OCI-LY7 (cell line): ENCODE measurements at regions of chr5 and their contacts with region 1.

Region 1: GRCh38 chr5:179974946-179975712 is 67.4 kb upstream of the TBC1D9B start:
- DNase-seq: peak; percentile 86
- H3K4me3 ChIP-seq: no peak overlapping the region
- H3K27ac ChIP-seq: no peak overlapping the region
- H3K4me1 ChIP-seq: peaks cover 25% of the 10 kb centered on the region
- CTCF ChIP-seq: peak; percentile 89

Region 2: DNA sequence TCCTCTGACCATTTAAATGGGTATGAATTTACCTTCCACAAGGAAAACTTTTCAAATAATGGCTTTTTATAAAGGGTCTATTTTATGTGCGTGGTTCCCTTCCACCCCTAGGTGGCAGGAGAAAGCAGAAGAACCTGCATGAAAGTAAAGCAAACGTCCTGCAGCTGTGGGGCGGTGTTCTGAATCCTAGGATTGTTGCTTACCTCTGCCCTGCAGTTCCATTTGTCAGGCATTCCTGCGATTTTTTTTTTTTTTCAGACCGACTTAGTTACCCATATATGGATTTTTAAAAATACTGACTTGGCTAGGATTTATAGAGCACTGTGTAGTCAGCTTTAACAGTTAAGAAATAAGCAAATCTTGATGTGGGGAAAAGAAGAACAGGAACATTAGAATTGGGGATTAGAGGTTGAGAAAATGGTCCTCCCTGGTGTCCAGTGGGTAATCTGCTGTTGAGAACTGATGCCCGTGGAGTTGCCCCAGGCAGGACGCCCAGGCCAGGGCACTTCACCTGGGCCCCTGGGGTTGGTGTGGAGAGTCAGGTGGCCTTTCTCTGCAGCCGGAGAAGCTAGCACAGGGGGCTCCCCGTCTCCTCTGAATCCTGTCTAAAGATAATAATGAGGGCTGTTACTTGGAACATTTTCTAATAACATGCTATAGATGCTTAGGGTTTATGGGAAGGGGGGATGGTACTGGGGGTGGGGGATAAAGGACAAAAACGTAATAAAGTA is 211.7 kb before region 1 on chr5:
- CTCF ChIA-PET with region 1: no interaction called
- POLR2A ChIA-PET with region 1: no interaction called
- intact Hi-C with region 1: loop called (anchors 10 kb)
- DNase-seq: peak; percentile 69
- H3K4me3 ChIP-seq: no peak overlapping the region
- H3K27ac ChIP-seq: no peak overlapping the region
- H3K4me1 ChIP-seq: peaks cover 17% of the 10 kb centered on the region
- CTCF ChIP-seq: peak; percentile 99

Region 3: DNA sequence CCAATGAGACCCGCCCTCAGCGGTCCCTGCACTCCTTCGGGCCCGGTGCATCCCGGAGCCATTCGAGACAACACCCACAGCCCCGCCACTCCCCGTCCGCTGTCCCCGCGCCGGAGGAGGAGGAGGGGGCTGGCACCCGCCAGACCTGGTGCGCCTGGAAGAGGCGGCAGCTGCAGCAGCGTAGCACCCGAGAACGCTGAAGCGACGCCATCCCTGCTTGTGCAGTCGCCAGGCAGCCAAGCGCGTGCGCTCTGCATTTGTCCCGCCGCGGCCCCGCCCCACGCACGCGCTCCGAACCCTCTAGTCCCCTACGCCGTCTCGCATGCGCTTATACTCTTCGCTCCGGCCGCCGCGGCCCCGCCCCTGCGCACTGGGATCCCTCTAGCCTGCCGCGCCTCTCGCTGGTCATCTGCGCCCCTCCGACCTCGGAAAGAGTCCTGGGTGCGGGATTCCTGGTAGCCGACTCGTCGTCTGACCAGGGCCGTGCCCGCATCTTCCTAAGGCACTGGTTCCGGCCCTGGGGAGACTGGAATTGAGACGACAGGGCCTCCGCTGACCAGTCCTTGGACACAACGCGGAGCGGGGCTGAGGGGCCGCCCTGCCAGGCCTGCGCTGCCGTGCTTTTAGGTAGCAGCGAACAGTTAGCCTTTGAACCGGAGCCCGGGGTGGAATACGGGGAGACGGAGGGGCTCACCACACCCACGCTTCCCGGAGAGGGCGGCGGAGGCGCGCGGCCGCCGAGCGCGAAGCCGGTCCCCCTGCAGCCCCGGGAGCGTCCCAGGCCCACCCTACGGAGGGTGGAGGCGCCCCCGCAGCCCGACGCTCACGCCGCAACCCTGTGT is 116.3 kb before region 1 on chr5 and contains the start of gene MRNIP:
- CTCF ChIA-PET with region 1: no interaction called
- POLR2A ChIA-PET with region 1: no interaction called
- intact Hi-C with region 1: loop called (anchors 1 kb)
- DNase-seq: peak; percentile 96
- H3K4me3 ChIP-seq: peak within 1 kb of the TSS; percentile 90
- H3K27ac ChIP-seq: peak within 1 kb of the TSS; percentile 69
- H3K4me1 ChIP-seq: peaks cover 27% of the 10 kb centered on the region
- CTCF ChIP-seq: no peak
- total RNA-seq, gene MRNIP: 76.2 and 78.7 TPM in 2 replicates

Region 4: GRCh38 chr5:179866258-179867078 is 108.7 kb before region 1 on chr5:
- CTCF ChIA-PET with region 1: no interaction called
- POLR2A ChIA-PET with region 1: no interaction called
- intact Hi-C with region 1: loop called (anchors 1 kb)
- DNase-seq: peak; percentile 63
- H3K4me3 ChIP-seq: no peak overlapping the region
- H3K27ac ChIP-seq: peak overlapping the region; percentile 21
- H3K4me1 ChIP-seq: peaks cover 10% of the 10 kb centered on the region
- CTCF ChIP-seq: peak; percentile 70

Region 5: GRCh38 chr5:179907570-179908324 is 67.4 kb before region 1 on chr5 and contains the start of gene TBC1D9B:
- CTCF ChIA-PET with region 1: no interaction called
- POLR2A ChIA-PET with region 1: interaction called, 4 read pairs
- intact Hi-C with region 1: loop called (anchors 5 kb)
- DNase-seq: peak; percentile 85
- H3K4me3 ChIP-seq: peak within 1 kb of the TSS; percentile 86
- H3K27ac ChIP-seq: peak within 1 kb of the TSS; percentile 26
- H3K4me1 ChIP-seq: peaks cover 19% of the 10 kb centered on the region
- CTCF ChIP-seq: peak; percentile 31; the same call in 1 of the 2 replicates
- total RNA-seq, gene TBC1D9B: 49.4 and 52.2 TPM in 2 replicates

Region 6: DNA sequence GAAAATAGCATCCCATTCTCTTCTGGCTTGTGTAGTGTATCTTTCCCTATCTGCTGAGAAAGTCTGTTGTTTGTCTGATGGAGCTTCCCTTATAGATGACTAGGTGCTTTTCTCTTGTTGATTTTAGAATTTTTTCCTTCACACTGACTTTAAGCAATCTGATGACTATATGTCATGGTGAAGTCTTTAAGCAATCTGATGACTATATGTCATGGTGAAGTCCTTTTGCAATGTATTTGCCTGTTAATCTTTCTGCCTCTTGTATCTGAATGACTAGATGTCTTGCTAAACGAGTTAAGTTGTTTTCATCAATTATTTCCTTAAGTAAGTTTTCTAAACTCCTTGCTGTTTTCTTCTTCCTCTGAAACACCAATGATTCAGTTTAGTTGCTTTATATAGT is 16.0 kb after region 1 on chr5:
- CTCF ChIA-PET with region 1: no interaction called
- POLR2A ChIA-PET with region 1: no interaction called
- intact Hi-C with region 1: no loop called
- DNase-seq: no peak
- H3K4me3 ChIP-seq: no peak overlapping the region
- H3K27ac ChIP-seq: no peak overlapping the region
- H3K4me1 ChIP-seq: no peaks in the 10 kb centered on the region
- CTCF ChIP-seq: no peak